ENCODE measurements at regions of chr12 and their contacts with region 1.

Region 1: DNA sequence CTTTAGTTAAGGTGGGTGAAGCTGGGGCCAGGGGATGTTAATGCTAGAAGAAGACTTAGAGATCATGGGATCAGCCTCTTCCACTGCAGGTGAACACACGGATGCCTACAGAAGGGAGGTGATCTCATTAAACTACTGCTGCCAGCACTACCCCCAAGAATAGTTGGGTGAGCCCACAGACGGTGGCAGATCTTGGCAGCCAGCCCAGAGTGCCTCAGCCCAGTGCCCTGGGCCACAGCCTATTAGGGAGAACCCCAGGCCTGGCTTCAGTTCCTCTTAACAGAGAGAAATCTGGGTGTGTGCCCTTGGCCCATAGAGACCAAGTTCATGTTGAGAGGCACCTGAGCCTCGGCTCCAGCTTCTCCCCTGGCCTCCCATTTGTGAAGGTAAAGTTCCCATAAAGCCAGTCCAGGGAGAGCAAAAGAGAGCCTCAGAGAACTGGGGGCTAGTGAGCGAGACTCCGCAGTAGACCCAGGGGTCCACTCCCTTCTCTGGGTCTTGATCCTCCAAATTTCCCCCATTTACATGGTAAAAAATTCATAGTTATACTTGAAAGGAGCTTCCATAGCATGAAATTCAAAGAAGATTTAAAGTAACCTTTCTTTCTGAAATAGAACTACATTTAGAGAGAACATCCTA is 125.0 kb upstream of the CCND2 start:
- DNase-seq: no peak
- H3K4me3 Mint-ChIP-seq: no peak overlapping the region
- H3K27ac Mint-ChIP-seq: peak overlapping the region; percentile 28
- H3K4me1 Mint-ChIP-seq: peaks cover 90% of the 10 kb centered on the region
- H3K27me3 Mint-ChIP-seq: no peaks in the 10 kb centered on the region

Region 2: DNA sequence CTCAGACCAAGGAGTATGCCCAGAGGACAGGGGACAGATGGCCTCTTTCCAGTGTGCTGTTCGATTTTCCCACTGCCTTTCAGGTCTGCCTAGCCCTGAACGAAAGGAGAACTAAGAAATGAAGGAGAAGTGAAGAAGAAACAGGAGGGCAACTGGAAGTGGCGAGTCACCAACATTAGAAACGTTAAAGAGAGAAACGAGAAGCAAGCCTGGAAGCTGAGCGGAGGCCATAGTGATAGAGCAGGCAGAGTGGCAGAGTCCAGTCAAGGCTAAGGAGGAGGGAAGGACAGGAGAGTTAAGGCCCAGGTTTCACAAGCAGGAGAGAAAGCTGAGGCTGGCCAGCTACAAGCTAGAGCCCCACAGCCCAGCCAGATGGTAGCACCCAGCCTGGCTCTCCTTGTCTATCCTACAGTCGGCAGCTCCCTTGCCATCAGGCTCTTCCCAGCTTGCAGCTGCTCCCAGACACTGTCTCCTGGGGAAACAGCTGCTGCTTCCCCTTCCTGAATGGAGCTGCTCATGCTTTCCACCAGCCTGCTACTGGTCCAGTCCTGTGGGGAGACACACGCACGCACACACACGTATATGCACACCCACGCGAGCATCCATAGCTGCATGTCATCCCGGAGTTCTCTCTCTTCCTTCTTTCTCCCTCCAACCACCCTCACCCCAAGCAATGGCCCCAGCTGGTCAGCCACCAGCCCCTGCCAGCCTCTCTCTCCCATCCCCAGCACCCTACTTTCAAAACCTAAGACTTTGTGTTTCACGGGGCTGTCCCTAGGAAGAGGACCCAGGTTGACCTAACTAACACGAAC is 14.7 kb before region 1 on chr12:
- CTCF ChIA-PET with region 1: interaction called, 11 read pairs
- POLR2A ChIA-PET with region 1: no interaction called
- DNase-seq: no peak
- H3K4me3 Mint-ChIP-seq: no peak overlapping the region
- H3K27ac Mint-ChIP-seq: no peak overlapping the region
- H3K4me1 Mint-ChIP-seq: peaks cover 34% of the 10 kb centered on the region
- H3K27me3 Mint-ChIP-seq: no peaks in the 10 kb centered on the region

Region 3: GRCh38 chr12:4164559-4165558 is 16.3 kb after region 1 on chr12:
- CTCF ChIA-PET with region 1: interaction called, 16 read pairs
- POLR2A ChIA-PET with region 1: interaction called, 8 read pairs
- DNase-seq: peak; percentile 68
- H3K4me3 Mint-ChIP-seq: peak overlapping the region; percentile 75
- H3K27ac Mint-ChIP-seq: peak overlapping the region; percentile 94
- H3K4me1 Mint-ChIP-seq: peaks cover 52% of the 10 kb centered on the region
- H3K27me3 Mint-ChIP-seq: no peaks in the 10 kb centered on the region

Region 4: GRCh38 chr12:4223249-4223845 is 74.8 kb after region 1 on chr12:
- CTCF ChIA-PET with region 1: no interaction called
- POLR2A ChIA-PET with region 1: no interaction called
- DNase-seq: no peak
- H3K4me3 Mint-ChIP-seq: no peak overlapping the region
- H3K27ac Mint-ChIP-seq: no peak overlapping the region
- H3K4me1 Mint-ChIP-seq: peaks cover 15% of the 10 kb centered on the region
- H3K27me3 Mint-ChIP-seq: peaks cover 3% of the 10 kb centered on the region